MCF 10A (cell line): ENCODE measurements at regions of chr19 and their contacts with region 1.

Region 1: DNA sequence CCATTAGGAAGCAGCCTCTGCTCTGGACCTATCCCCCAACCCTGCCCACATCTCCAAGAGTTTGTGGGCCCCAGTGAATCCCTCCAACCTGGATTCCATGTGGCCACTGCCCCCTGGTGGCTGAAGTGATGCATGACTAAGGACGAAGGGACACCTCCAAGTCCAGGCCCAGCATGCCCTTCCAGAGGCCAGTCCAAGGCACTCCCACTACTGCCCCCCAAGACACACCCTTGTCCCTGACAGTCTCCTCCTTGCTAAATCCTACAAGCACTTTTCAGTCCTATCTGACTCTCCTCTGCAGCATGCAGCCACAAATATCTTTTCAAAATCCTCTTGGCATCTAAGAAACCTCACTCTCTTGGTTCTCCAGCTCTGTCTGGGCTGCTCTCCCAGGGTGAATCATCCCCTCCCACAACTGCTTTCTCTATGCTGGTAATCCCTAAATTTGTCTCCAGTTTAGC is 33.0 kb downstream of the DEDD2 start:
- DNase-seq: peak; percentile 87
- H3K4me3 Mint-ChIP-seq: no peak overlapping the region
- H3K27ac Mint-ChIP-seq: no peak overlapping the region
- H3K4me1 Mint-ChIP-seq: peaks cover 14% of the 10 kb centered on the region
- H3K27me3 Mint-ChIP-seq: peaks cover 12% of the 10 kb centered on the region
- CTCF ChIP-seq: peak; percentile 89

Region 2: GRCh38 chr19:42113641-42114348 is 70.6 kb before region 1 on chr19:
- CTCF ChIA-PET with region 1: interaction called, 42 read pairs
- POLR2A ChIA-PET with region 1: no interaction called
- intact Hi-C with region 1: loop called (anchors 1 kb)
- DNase-seq: peak; percentile 97
- H3K4me3 Mint-ChIP-seq: peak overlapping the region; percentile 46
- H3K27ac Mint-ChIP-seq: peak overlapping the region; percentile 92
- H3K4me1 Mint-ChIP-seq: peaks cover 33% of the 10 kb centered on the region
- H3K27me3 Mint-ChIP-seq: no peaks in the 10 kb centered on the region
- CTCF ChIP-seq: peak; percentile 6

Region 3: DNA sequence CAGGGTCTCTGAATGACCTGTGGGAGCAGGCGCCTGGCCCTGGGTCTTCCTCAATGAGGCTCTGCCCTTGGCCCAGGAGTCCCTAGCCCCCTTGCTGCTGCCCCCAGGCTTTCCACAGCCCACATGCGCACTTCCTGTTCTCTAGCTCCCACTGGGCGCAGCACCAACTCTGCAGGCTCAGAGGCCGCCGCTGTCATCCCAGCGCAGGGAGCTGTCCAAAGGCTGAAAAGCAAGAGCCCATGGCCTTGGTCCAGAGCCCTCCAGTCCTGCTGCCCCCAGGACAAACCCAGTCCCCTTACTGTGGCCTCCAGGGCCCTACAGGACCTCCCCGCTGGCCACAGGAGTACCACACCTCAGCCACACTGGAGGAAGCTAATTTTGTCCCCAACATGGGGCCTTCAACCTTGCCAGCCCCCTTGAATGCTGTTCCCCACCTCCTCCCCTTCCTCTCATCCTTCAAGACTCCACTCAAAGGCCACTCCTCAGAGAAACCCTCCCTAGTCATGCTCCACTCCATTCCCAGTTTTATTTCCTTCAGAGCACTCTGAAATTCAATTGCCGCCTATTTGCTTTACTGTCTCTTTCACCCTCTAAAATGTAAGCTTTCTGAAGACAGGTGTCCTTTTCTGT is 44.2 kb before region 1 on chr19:
- CTCF ChIA-PET with region 1: interaction called, 61 read pairs
- POLR2A ChIA-PET with region 1: no interaction called
- intact Hi-C with region 1: no loop called
- DNase-seq: peak; percentile 51
- H3K4me3 Mint-ChIP-seq: no peak overlapping the region
- H3K27ac Mint-ChIP-seq: no peak overlapping the region
- H3K4me1 Mint-ChIP-seq: no peaks in the 10 kb centered on the region
- H3K27me3 Mint-ChIP-seq: peaks cover 23% of the 10 kb centered on the region
- CTCF ChIP-seq: no peak